ENCODE measurements at regions of chr10 and their contacts with region 1.

Region 1: GRCh38 chr10:112471878-112472487 is 25.0 kb downstream of the VTI1A start:
- DNase-seq: peak in 2 of 5 donors; percentile 16 to 33
- H3K4me3 ChIP-seq: no peak overlapping the region
- H3K4me3 Mint-ChIP-seq: no peak overlapping the region
- H3K27ac ChIP-seq: no peak overlapping the region
- H3K27ac Mint-ChIP-seq: peak overlapping the region in 4 of 8 donors; percentile 3 to 81 (median 56)
- H3K4me1 ChIP-seq: no peaks in the 10 kb centered on the region
- H3K4me1 Mint-ChIP-seq: peaks cover 12 to 25% (median 22%) of the 10 kb centered on the region in 3 donors
- H3K27me3 ChIP-seq: no peaks in the 10 kb centered on the region
- H3K27me3 Mint-ChIP-seq: no peaks in the 10 kb centered on the region

Region 2: DNA sequence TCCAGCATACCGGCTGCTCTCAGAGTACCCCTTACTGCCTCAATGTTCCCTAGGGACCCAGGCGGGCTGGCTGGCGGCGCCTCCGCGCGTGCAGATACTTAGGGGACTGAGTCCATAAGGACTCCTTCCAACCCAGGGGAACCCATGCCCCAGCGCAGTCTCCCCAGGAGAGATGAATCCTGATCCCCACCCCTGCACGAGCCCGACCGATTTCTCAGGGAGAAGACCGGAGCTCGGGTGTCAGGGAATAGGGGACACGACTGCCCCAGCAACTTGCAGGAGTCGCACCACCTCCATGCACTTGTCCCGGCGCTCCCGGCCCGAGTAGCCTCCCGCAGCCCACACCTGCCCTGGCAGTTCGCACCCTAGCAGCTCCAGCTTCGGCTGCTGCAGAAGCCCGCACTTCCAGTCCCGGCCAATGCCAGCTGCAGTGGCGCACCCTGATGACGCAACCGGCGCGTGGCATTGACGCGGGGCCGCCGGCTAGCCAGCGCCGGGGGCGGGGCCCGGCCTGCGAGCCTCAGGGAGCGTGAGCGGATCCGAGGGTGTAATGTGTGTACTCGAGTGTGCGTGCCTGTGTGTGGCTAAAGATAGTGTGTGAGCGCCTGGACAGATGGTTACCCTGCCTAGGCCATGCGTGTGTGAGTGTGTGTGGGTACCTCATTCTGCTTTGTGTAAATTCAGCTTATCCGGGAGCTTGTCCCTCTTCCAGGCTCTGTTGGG is 288.5 kb before region 1 on chr10 and contains the start of gene GPAM:
- CTCF ChIA-PET with region 1: interaction called, 10 read pairs
- POLR2A ChIA-PET with region 1: no interaction called
- DNase-seq: peak; percentile 95 to 99 (median 97)
- H3K4me3 ChIP-seq: peak within 1 kb of the TSS; percentile 88
- H3K4me3 Mint-ChIP-seq: peak within 1 kb of the TSS; percentile 86 to 97 (median 90)
- H3K27ac ChIP-seq: peak within 1 kb of the TSS; percentile 71
- H3K27ac Mint-ChIP-seq: peak within 1 kb of the TSS; percentile 87 to 98 (median 96)
- H3K4me1 ChIP-seq: peaks cover 17% of the 10 kb centered on the region
- H3K4me1 Mint-ChIP-seq: peaks cover 26 to 41% (median 40%) of the 10 kb centered on the region in 3 donors
- H3K27me3 ChIP-seq: no peaks in the 10 kb centered on the region
- H3K27me3 Mint-ChIP-seq: peaks cover 0 to 9% of the 10 kb centered on the region in 2 donors
- total RNA-seq, gene GPAM: 16.4 to 17.2 TPM

Region 3: GRCh38 chr10:112409755-112410154 is 62.2 kb before region 1 on chr10:
- CTCF ChIA-PET with region 1: no interaction called
- POLR2A ChIA-PET with region 1: no interaction called
- DNase-seq: no peak
- H3K4me3 ChIP-seq: no peak overlapping the region
- H3K4me3 Mint-ChIP-seq: no peak overlapping the region
- H3K27ac ChIP-seq: no peak overlapping the region
- H3K27ac Mint-ChIP-seq: peak overlapping the region in 3 of 8 donors; percentile 29 to 73 (median 48)
- H3K4me1 ChIP-seq: no peaks in the 10 kb centered on the region
- H3K4me1 Mint-ChIP-seq: peaks cover 0 to 5% (median 0%) of the 10 kb centered on the region in 3 donors
- H3K27me3 ChIP-seq: no peaks in the 10 kb centered on the region
- H3K27me3 Mint-ChIP-seq: no peaks in the 10 kb centered on the region

Region 4: DNA sequence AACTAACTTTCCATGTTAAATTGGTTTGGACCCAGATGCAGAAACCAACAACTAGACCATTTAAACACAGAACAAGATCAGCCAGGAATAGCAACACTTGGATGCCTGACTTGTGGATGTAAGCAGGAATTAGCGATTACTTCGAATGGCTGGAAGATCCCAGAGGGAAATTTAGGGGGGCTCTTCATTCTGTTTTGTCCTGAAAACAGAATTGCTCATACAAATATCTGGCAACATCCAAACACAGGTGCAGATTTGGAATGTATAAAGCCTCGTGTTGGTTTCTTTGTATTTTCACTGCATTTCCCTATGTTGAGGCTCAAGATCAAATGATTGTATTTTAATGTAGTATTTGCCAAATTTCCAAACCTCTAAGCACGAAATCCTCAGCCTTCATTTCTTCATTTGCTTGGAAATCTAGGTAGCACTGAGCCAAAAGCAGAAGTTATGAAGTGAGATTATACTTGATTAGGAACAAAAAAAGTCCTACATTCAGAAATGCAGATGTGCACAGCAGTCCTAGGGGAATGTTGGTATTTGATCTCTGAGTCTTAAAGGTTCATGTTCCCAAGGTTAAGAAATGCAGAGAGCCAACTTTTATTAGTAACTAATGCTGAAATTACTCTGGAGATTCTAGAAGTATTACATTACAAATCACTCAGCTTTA is 229.4 kb after region 1 on chr10:
- CTCF ChIA-PET with region 1: no interaction called
- POLR2A ChIA-PET with region 1: no interaction called
- DNase-seq: no peak
- H3K4me3 ChIP-seq: no peak overlapping the region
- H3K4me3 Mint-ChIP-seq: no peak overlapping the region
- H3K27ac ChIP-seq: no peak overlapping the region
- H3K27ac Mint-ChIP-seq: no peak overlapping the region
- H3K4me1 ChIP-seq: no peaks in the 10 kb centered on the region
- H3K4me1 Mint-ChIP-seq: no peaks in the 10 kb centered on the region
- H3K27me3 ChIP-seq: no peaks in the 10 kb centered on the region
- H3K27me3 Mint-ChIP-seq: no peaks in the 10 kb centered on the region